Calu3 (cell line): ENCODE measurements at regions of chr1 and their contacts with region 1.

Region 1: DNA sequence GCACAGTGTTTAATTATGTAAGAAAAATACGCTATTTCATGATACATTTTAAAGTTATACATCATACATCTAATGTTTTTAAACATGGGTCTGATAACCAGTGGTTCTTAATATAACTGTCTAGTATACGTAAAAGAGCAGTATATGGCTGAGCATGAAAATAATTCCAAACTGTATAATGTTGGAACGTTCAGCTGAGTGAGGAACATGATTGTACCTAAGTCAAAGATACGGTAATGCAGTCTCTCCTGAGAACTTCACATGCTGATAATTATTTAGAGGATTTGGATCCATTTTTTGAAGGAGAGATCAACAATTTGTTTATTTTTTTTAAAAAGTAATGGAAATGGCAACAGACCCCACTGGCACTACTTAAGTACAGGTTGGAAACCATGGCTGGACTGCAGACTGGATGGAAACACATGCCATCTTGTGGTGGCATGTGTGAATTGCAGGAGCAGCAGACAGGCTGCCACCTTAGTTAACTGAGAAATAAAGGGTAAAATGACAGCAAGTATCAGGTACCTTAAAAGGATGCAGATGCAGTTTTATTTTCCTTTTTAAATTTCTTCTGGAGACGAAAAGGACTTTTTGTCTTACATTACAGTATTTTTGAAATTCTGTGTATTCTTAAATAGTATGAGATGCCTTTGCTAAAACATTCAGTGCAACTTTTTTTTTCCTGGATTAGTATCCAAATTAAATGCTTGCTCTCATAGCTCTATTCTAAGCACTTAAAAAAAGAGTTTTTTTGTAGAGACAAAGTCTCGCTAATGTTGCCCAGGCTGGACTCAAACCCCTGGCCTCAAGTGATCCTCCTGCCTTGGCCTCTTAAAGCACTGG is 73.8 kb downstream of the MTR start:
- DNase-seq: peak; percentile 52
- H3K4me3 Mint-ChIP-seq: no peak overlapping the region
- H3K27ac Mint-ChIP-seq: no peak overlapping the region
- H3K4me1 Mint-ChIP-seq: no peaks in the 10 kb centered on the region
- H3K27me3 Mint-ChIP-seq: no peaks in the 10 kb centered on the region
- CTCF ChIP-seq: peak; percentile 94

Region 2: DNA sequence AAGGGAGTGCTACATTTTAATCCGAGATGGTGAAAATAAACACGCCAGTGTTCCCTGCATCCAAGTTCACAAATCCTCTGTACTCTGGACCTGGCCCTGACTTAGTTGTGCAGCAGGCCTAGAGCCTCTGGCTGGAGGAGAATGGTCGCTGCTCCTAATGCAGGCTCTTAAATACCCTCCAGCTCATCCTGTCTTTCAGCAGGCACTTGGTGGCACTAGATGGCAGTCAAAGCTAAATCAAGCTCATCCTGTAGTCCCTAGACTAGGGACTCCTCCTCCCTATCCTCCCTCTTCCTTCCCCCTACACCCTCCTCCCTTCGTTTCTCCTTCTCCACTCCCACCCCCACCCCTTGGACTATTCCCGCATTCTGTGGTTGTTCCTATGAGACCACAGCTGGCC is 115.3 kb before region 1 on chr1:
- CTCF ChIA-PET with region 1: interaction called, 4 read pairs
- intact Hi-C with region 1: loop called (anchors 1 kb)
- DNase-seq: peak; percentile 36
- H3K4me3 Mint-ChIP-seq: no peak overlapping the region
- H3K27ac Mint-ChIP-seq: no peak overlapping the region
- H3K4me1 Mint-ChIP-seq: no peaks in the 10 kb centered on the region
- H3K27me3 Mint-ChIP-seq: peaks cover under 1% of the 10 kb centered on the region
- CTCF ChIP-seq: peak; percentile 20

Region 3: DNA sequence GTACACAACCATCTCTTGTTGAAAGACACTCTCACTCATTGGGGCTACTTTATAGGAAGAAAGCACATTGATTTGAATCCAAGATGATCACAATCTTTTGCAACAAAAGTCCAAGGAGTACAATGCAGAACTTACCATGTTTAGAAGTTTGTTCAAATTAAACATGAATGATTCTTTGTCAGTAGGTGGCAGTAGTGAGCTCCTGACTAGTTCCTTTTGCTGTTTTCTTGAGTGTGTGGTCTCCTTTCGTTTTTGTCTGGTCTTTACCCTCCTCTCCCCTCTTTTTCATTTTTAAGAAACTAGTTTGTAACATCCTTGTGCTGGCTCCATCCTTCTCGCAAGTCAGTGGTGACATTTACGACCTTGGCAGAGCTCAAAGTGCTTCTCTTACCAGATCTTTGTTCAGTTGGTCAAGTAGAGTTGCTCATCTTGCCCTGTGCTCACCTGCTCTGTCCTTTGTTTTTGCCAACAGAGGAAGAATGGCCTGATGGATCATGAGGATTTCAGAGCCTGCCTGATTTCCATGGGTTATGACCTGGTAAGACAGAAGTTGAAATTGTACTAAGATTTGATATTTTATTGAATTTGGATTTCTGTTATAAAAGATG is 109.5 kb before region 1 on chr1:
- CTCF ChIA-PET with region 1: no interaction called
- intact Hi-C with region 1: loop called (anchors 1 kb)
- DNase-seq: peak; percentile 12
- H3K4me3 Mint-ChIP-seq: no peak overlapping the region
- H3K27ac Mint-ChIP-seq: no peak overlapping the region
- H3K4me1 Mint-ChIP-seq: no peaks in the 10 kb centered on the region
- H3K27me3 Mint-ChIP-seq: no peaks in the 10 kb centered on the region
- CTCF ChIP-seq: peak; percentile 60

Region 4: GRCh38 chr1:237386362-237387143 is 517.7 kb after region 1 on chr1:
- CTCF ChIA-PET with region 1: no interaction called
- intact Hi-C with region 1: loop called (anchors 5 kb)
- DNase-seq: no peak
- H3K4me3 Mint-ChIP-seq: no peak overlapping the region
- H3K27ac Mint-ChIP-seq: no peak overlapping the region
- H3K4me1 Mint-ChIP-seq: no peaks in the 10 kb centered on the region
- H3K27me3 Mint-ChIP-seq: no peaks in the 10 kb centered on the region
- CTCF ChIP-seq: peak; percentile 62